ENCODE measurements at regions of chr13 and their contacts with region 1.

Region 1: DNA sequence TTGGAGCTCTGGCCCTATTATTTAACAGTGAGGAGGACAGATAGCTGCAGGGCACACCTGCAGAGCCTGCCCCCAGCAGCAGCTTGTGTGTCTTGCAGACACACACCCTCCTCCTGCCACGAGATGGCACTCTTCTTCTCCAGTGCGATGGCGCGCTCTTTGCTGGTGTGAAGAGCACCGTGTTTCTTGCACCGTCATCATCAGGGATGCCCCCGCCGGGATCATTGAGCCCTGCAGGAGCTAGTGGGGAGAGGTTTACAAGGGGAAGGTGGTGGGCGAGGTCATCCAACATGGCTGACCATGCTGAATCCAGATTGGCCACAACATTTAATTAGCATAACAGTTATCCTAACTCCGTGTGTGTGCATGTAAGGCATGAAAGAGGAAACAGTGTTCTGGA is 105.6 kb downstream of the RAB20 start:
- DNase-seq: peak; percentile 79
- ATAC-seq: peak; percentile 96
- H3K4me3 ChIP-seq: no peak overlapping the region
- H3K27ac ChIP-seq: no peak overlapping the region
- H3K4me1 ChIP-seq: peaks cover 41% of the 10 kb centered on the region
- H3K27me3 ChIP-seq: peaks cover 0 to 31% of the 10 kb centered on the region in 2 experiments; a peak in 3 of 5 replicates
- CTCF ChIP-seq: peak; percentile 97
- EP300 ChIP-seq: no peak
- POLR2A ChIP-seq: no peak
- RAD21 ChIP-seq: peak; percentile 92

Region 2: DNA sequence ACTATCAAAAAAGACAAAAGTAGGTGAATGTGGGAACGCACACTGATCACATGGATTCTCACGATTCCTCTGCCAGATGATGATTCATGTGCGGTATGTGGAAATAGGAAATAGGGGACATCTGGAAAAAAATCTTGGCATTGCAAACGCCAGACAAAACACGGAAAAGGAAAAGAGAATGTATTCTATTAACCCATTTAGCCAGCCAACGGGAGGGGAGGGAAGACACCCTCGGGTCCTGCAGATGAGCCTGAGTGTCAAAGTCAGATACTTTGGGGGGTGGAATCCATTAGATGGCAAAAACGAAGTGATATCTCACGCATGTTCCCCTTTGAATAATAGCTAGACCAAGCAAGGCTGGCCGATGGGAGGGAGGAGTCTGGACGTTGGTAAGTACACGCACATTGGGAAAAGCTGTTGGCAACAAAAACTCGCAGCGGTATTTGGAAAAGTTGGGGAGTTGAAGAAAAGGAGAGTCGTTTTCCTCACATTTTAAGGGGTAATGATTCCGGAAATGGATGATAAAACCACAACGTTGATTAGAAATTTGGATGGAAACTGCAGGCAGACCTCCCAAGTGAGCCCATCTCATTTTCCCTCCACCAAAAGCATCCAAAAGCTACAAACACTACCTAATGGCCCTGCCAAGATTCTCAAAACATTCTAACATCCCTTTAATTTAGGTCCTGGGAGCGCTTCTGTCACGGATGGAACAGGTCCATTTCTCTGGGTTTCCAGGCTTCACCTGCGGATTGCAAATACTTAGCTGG is 222.6 kb before region 1 on chr13:
- CTCF ChIA-PET with region 1: no interaction called
- POLR2A ChIA-PET with region 1: no interaction called
- in situ Hi-C with region 1: no loop called
- intact Hi-C with region 1: no loop called
- DNase-seq: no peak
- ATAC-seq: no peak
- H3K4me3 ChIP-seq: no peak overlapping the region
- H3K27ac ChIP-seq: no peak overlapping the region
- H3K4me1 ChIP-seq: no peaks in the 10 kb centered on the region
- H3K27me3 ChIP-seq: peaks cover 3 to 63% of the 10 kb centered on the region in 2 experiments; a peak in 3 of 5 replicates
- CTCF ChIP-seq: no peak
- EP300 ChIP-seq: no peak
- POLR2A ChIP-seq: no peak
- RAD21 ChIP-seq: no peak

Region 3: GRCh38 chr13:110525328-110526319 is 69.7 kb after region 1 on chr13:
- CTCF ChIA-PET with region 1: no interaction called
- POLR2A ChIA-PET with region 1: no interaction called
- in situ Hi-C with region 1: no loop called
- intact Hi-C with region 1: loop called (anchors 1 kb)
- DNase-seq: no peak
- ATAC-seq: no peak
- H3K4me3 ChIP-seq: no peak overlapping the region
- H3K27ac ChIP-seq: no peak overlapping the region
- H3K4me1 ChIP-seq: peaks cover 42% of the 10 kb centered on the region
- H3K27me3 ChIP-seq: no peaks in the 10 kb centered on the region
- CTCF ChIP-seq: no peak
- EP300 ChIP-seq: no peak
- POLR2A ChIP-seq: no peak
- RAD21 ChIP-seq: no peak

Region 4: GRCh38 chr13:110561344-110562035 is 105.5 kb after region 1 on chr13 and contains the start of gene RAB20:
- CTCF ChIA-PET with region 1: no interaction called
- POLR2A ChIA-PET with region 1: interaction called, 3 read pairs
- in situ Hi-C with region 1: loop called (anchors 5 kb)
- intact Hi-C with region 1: no loop called
- DNase-seq: peak; percentile 80
- ATAC-seq: peak; percentile 80
- H3K4me3 ChIP-seq: peak within 1 kb of the TSS; percentile 90 to 98 (median 94)
- H3K27ac ChIP-seq: peak within 1 kb of the TSS; percentile 95
- H3K4me1 ChIP-seq: peaks cover 63% of the 10 kb centered on the region
- H3K27me3 ChIP-seq: no peaks in the 10 kb centered on the region; a peak in 1 of 5 replicates
- CTCF ChIP-seq: no peak; the same call in 1 of the 2 replicates
- EP300 ChIP-seq: no peak
- POLR2A ChIP-seq: peak; percentile 65 to 79
- RAD21 ChIP-seq: no peak
- total RNA-seq, gene RAB20: 15.2 and 15.6 TPM in 2 replicates

Region 5: GRCh38 chr13:110615322-110616102 is 159.6 kb after region 1 on chr13 and contains the start of gene NAXD:
- CTCF ChIA-PET with region 1: no interaction called
- POLR2A ChIA-PET with region 1: no interaction called
- in situ Hi-C with region 1: no loop called
- intact Hi-C with region 1: loop called (anchors 5 kb)
- DNase-seq: peak; percentile 89
- ATAC-seq: peak; percentile 95
- H3K4me3 ChIP-seq: peak within 1 kb of the TSS; percentile 96 to 97 (median 97)
- H3K27ac ChIP-seq: peak within 1 kb of the TSS; percentile 83
- H3K4me1 ChIP-seq: peaks cover 62% of the 10 kb centered on the region
- H3K27me3 ChIP-seq: peaks cover 1 to 13% of the 10 kb centered on the region in 2 experiments; a peak in 3 of 5 replicates
- CTCF ChIP-seq: no peak; the same call in 1 of the 2 replicates
- EP300 ChIP-seq: 0 out of 4 replicates have a peak, but pooled peaks of 1 of the 2 experiments have one; percentile 15
- POLR2A ChIP-seq: peak; percentile 73 to 83
- RAD21 ChIP-seq: peak; percentile 19; the same call in 1 of the 2 replicates
- total RNA-seq, gene NAXD: 18.5 and 19.0 TPM in 2 replicates